PC-9 (cell line): ENCODE measurements at regions of chr9 and their contacts with region 1.

Region 1: GRCh38 chr9:33225319-33226149 is 14.4 kb upstream of the SPINK4 start:
- DNase-seq: peak; percentile 55 to 69
- H3K4me3 ChIP-seq: no peak overlapping the region
- H3K27ac ChIP-seq: no peak overlapping the region
- H3K4me1 ChIP-seq: peaks cover 25% of the 10 kb centered on the region
- H3K27me3 ChIP-seq: no peaks in the 10 kb centered on the region
- CTCF ChIP-seq: peak; percentile 78

Region 2: DNA sequence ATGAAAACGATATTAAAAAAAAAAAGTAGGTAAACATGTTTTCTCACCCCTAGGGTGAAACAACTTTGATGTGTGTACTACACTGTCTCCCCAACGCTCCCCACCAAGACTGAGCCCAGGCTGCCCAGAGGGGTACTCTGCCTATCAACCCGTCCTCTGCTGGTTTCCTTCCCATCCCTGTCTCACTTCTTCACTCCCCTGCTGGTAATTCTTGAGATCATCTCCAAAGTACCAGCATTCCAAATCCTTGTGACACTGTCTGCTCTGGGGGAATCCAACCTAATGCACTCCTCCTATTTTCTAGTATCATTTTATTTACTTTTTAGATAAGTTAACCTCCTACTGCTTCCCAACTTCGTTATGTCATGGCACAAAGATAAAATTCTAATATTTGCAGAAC is 217.8 kb before region 1 on chr9:
- CTCF ChIA-PET with region 1: no interaction called
- POLR2A ChIA-PET with region 1: no interaction called
- intact Hi-C with region 1: loop called (anchors 10 kb)
- DNase-seq: no peak
- H3K4me3 ChIP-seq: no peak overlapping the region
- H3K27ac ChIP-seq: no peak overlapping the region
- H3K4me1 ChIP-seq: no peaks in the 10 kb centered on the region
- H3K27me3 ChIP-seq: no peaks in the 10 kb centered on the region
- CTCF ChIP-seq: no peak

Region 3: GRCh38 chr9:33159760-33160127 is 65.8 kb before region 1 on chr9:
- CTCF ChIA-PET with region 1: no interaction called
- POLR2A ChIA-PET with region 1: no interaction called
- intact Hi-C with region 1: loop called (anchors 2 kb)
- DNase-seq: peak; percentile 55 to 73
- H3K4me3 ChIP-seq: peak overlapping the region; percentile 93; the same call in 1 of the 2 replicates
- H3K27ac ChIP-seq: peak overlapping the region; percentile 99
- H3K4me1 ChIP-seq: peaks cover 81% of the 10 kb centered on the region
- H3K27me3 ChIP-seq: no peaks in the 10 kb centered on the region
- CTCF ChIP-seq: no peak

Region 4: DNA sequence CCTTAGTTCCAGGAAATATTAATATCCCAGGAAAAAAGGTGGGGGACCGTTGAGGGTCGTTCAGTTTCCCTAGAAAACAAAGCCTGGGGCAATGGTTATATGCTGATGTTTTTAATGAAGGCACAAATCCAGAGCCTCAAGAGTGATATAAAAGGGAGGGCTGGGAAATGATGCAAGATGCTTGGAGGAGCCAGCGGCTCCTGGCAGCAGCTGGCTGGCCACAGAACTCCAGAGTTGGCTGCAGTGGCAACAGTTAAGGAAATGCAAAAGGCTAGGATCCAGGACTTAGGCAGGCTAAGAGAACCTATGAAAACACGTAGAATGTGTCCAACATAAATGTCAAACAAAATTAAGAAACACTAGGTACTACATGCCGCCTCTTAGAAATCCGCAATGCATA is 27.4 kb before region 1 on chr9:
- CTCF ChIA-PET with region 1: no interaction called
- POLR2A ChIA-PET with region 1: no interaction called
- intact Hi-C with region 1: no loop called
- DNase-seq: no peak
- H3K4me3 ChIP-seq: no peak overlapping the region
- H3K27ac ChIP-seq: no peak overlapping the region
- H3K4me1 ChIP-seq: no peaks in the 10 kb centered on the region
- H3K27me3 ChIP-seq: no peaks in the 10 kb centered on the region
- CTCF ChIP-seq: no peak

Region 5: GRCh38 chr9:33290247-33291030 is 64.9 kb after region 1 on chr9 and contains the start of gene NFX1:
- CTCF ChIA-PET with region 1: no interaction called
- POLR2A ChIA-PET with region 1: no interaction called
- intact Hi-C with region 1: loop called (anchors 1 kb)
- DNase-seq: peak; percentile 84 to 90
- H3K4me3 ChIP-seq: peak within 1 kb of the TSS; percentile 75
- H3K27ac ChIP-seq: peak within 1 kb of the TSS; percentile 95
- H3K4me1 ChIP-seq: no peaks in the 10 kb centered on the region; the same call in 1 of the 2 replicates
- H3K27me3 ChIP-seq: no peaks in the 10 kb centered on the region
- CTCF ChIP-seq: no peak
- total RNA-seq, gene NFX1: 14.9 and 15.0 TPM in 2 replicates

Region 6: GRCh38 chr9:33403941-33404787 is 178.6 kb after region 1 on chr9:
- CTCF ChIA-PET with region 1: no interaction called
- POLR2A ChIA-PET with region 1: no interaction called
- intact Hi-C with region 1: loop called (anchors 1 kb)
- DNase-seq: no peak
- H3K4me3 ChIP-seq: no peak overlapping the region
- H3K27ac ChIP-seq: no peak overlapping the region
- H3K4me1 ChIP-seq: no peaks in the 10 kb centered on the region
- H3K27me3 ChIP-seq: no peaks in the 10 kb centered on the region
- CTCF ChIP-seq: no peak

Region 7: GRCh38 chr9:33623658-33624586 is 398.4 kb after region 1 on chr9:
- CTCF ChIA-PET with region 1: no interaction called
- POLR2A ChIA-PET with region 1: no interaction called
- intact Hi-C with region 1: loop called (anchors 1 kb)
- DNase-seq: peak; percentile 52 to 64
- H3K4me3 ChIP-seq: no peak overlapping the region
- H3K27ac ChIP-seq: no peak overlapping the region
- H3K4me1 ChIP-seq: peaks cover 10% of the 10 kb centered on the region
- H3K27me3 ChIP-seq: no peaks in the 10 kb centered on the region
- CTCF ChIP-seq: peak; percentile 80